GM12878 (cell line): ENCODE measurements at regions of chr12 and their contacts with region 1.

Region 1: DNA sequence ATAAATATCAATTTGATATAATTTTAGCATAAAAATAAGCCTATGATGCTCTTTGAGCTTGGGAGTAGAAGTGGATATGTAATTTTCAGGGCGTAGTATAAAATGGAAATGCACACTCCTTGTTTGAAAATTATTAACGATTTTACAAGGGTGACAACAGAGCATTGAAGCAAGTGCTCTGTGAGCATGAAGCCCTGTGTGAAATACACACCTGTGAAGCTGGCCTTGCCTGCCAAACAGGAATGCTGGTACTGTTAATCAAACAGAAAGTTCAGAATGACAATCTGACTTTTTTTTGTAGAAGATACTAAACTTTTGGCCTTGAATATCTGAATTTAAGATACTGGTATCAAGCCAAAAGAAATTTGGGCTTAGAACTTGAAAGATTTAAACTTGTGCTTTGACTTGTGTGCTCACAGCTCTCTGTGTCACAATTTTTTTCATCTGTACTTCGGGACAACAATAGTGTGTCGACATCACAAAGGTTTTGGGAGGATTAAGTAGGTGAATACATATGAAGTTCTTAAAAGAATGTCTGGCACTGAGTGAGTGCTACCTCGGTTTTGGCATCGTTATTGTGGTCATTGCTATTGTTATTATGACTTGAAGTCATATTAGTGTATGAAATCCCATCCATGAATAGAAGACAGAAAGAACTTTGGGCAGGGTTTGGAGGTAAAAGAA is 47.3 kb downstream of the LRRK2 start:
- DNase-seq: no peak
- ATAC-seq: no peak
- H3K4me3 ChIP-seq: no peak overlapping the region
- H3K27ac ChIP-seq: no peak overlapping the region
- H3K4me1 ChIP-seq: no peaks in the 10 kb centered on the region
- H3K27me3 ChIP-seq: no peaks in the 10 kb centered on the region
- CTCF ChIP-seq: no peak
- EP300 ChIP-seq: no peak
- POLR2A ChIP-seq: no peak
- RAD21 ChIP-seq: no peak

Region 2: GRCh38 chr12:40198601-40199000 is 73.5 kb before region 1 on chr12:
- CTCF ChIA-PET with region 1: no interaction called
- POLR2A ChIA-PET with region 1: no interaction called
- RAD21 ChIA-PET with region 1: no interaction called
- SMC1A ChIA-PET with region 1: no interaction called
- in situ Hi-C with region 1: no loop called
- intact Hi-C with region 1: no loop called
- DNase-seq: no peak
- ATAC-seq: no peak
- H3K4me3 ChIP-seq: no peak overlapping the region
- H3K27ac ChIP-seq: no peak overlapping the region
- H3K4me1 ChIP-seq: no peaks in the 10 kb centered on the region; the same call in 1 of the 2 replicates
- H3K27me3 ChIP-seq: no peaks in the 10 kb centered on the region
- CTCF ChIP-seq: no peak
- EP300 ChIP-seq: no peak
- POLR2A ChIP-seq: no peak
- RAD21 ChIP-seq: no peak

Region 3: DNA sequence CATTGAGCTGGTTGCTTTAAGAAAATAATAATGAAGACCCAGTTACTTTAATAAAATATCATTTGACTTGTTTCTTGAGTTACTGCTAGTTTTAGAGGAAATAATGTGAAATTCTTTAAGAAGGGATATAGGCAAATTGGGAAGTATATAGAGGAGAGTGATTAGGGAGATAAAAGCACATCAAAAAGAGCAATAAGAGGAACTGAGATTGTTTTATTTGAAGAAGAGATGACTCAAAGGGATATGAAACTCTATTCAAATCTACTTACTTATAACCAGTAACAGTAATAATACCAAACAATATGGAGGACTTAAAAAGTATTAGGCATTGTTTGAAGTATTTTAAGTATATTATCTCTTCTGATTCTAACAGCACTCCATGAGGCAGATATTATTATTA is 10.2 kb before region 1 on chr12:
- CTCF ChIA-PET with region 1: no interaction called
- POLR2A ChIA-PET with region 1: no interaction called
- RAD21 ChIA-PET with region 1: interaction called, 9 read pairs
- SMC1A ChIA-PET with region 1: interaction called, 11 read pairs
- in situ Hi-C with region 1: no loop called
- intact Hi-C with region 1: no loop called
- DNase-seq: no peak
- ATAC-seq: peak; percentile 84
- H3K4me3 ChIP-seq: no peak overlapping the region
- H3K27ac ChIP-seq: no peak overlapping the region
- H3K4me1 ChIP-seq: peaks cover 13% of the 10 kb centered on the region
- H3K27me3 ChIP-seq: no peaks in the 10 kb centered on the region
- CTCF ChIP-seq: no peak
- EP300 ChIP-seq: peak; percentile 50 to 72
- POLR2A ChIP-seq: no peak
- RAD21 ChIP-seq: no peak